B cell (primary cell): ENCODE measurements at regions of chr9 and their contacts with region 1.

Region 1: GRCh38 chr9:27529316-27530278 is at the start of gene MOB3B:
- DNase-seq: peak; percentile 89
- ATAC-seq: peak; percentile 83
- H3K4me3 ChIP-seq: peak within 1 kb of the TSS; percentile 71 to 93 (median 82)
- H3K4me3 Mint-ChIP-seq: peak within 1 kb of the TSS; percentile 100
- H3K27ac ChIP-seq: peak within 1 kb of the TSS; percentile 88 to 97
- H3K27ac Mint-ChIP-seq: peak within 1 kb of the TSS; percentile 99
- H3K4me1 ChIP-seq: peaks cover 28 to 30% of the 10 kb centered on the region in 2 donors
- H3K4me1 Mint-ChIP-seq: peaks cover 49% of the 10 kb centered on the region
- H3K27me3 ChIP-seq: no peaks in the 10 kb centered on the region
- H3K27me3 Mint-ChIP-seq: no peaks in the 10 kb centered on the region
- CTCF ChIP-seq: peak; percentile 97
- total RNA-seq, gene MOB3B: 7.3 and 7.6 TPM in 2 replicates

Region 2: DNA sequence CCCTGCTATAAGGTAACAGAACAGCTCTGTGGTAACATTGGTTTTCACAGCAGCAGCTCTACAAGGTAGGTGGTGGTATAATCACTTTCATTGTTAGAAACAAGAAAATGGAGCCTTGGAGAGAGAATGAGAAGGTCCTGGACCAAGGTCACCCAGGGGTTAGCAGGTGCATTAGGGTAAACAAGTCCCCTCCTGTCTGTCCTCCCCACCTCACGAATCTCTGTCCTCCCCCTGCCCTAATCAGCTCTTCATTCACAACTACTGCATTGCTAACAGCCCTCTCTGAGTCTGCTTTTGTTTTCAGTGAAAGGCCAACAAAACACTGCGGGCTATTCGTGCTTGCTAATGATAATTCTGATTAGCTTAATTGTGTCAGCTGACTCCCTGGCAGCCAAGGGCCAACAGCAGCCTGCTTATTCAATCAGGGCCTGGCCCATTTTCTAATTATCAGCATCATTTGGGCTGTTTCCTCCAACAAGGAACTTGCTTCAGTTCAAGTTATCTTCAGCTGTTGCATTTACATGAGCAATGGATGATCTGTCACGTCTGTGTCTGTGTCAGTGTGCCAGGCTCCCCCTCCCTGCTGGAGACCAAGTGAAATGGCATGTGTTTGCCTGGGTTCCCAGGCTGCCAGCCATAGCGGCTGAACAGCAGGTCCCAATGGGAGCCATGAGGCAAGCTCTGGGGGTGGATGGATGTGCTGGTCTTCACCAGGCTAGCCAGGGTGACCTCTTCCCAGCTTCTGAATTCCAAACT is 175.9 kb before region 1 on chr9:
- CTCF ChIA-PET with region 1: interaction called, 28 read pairs
- POLR2A ChIA-PET with region 1: no interaction called
- intact Hi-C with region 1: loop called (anchors 5 kb)
- DNase-seq: peak; percentile 48
- ATAC-seq: peak; percentile 68
- H3K4me3 ChIP-seq: no peak overlapping the region
- H3K4me3 Mint-ChIP-seq: no peak overlapping the region
- H3K27ac ChIP-seq: peak overlapping the region; percentile 0 to 58
- H3K27ac Mint-ChIP-seq: peak overlapping the region; percentile 84
- H3K4me1 ChIP-seq: peaks cover 31 to 34% of the 10 kb centered on the region in 2 donors
- H3K4me1 Mint-ChIP-seq: peaks cover 54% of the 10 kb centered on the region
- H3K27me3 ChIP-seq: no peaks in the 10 kb centered on the region
- H3K27me3 Mint-ChIP-seq: no peaks in the 10 kb centered on the region
- CTCF ChIP-seq: peak; percentile 16

Region 3: GRCh38 chr9:27371382-27371781 is 158.2 kb before region 1 on chr9:
- CTCF ChIA-PET with region 1: interaction called, 22 read pairs
- POLR2A ChIA-PET with region 1: interaction called, 4 read pairs
- intact Hi-C with region 1: loop called (anchors 2 kb)
- DNase-seq: no peak
- ATAC-seq: no peak
- H3K4me3 ChIP-seq: no peak overlapping the region
- H3K4me3 Mint-ChIP-seq: no peak overlapping the region
- H3K27ac ChIP-seq: no peak overlapping the region
- H3K27ac Mint-ChIP-seq: no peak overlapping the region
- H3K4me1 ChIP-seq: peaks cover 58 to 67% of the 10 kb centered on the region in 2 donors
- H3K4me1 Mint-ChIP-seq: peaks cover 66% of the 10 kb centered on the region
- H3K27me3 ChIP-seq: no peaks in the 10 kb centered on the region
- H3K27me3 Mint-ChIP-seq: no peaks in the 10 kb centered on the region
- CTCF ChIP-seq: no peak

Region 4: GRCh38 chr9:27394154-27394825 is 135.3 kb before region 1 on chr9:
- CTCF ChIA-PET with region 1: interaction called, 11 read pairs
- POLR2A ChIA-PET with region 1: no interaction called
- intact Hi-C with region 1: no loop called
- DNase-seq: no peak
- ATAC-seq: no peak
- H3K4me3 ChIP-seq: no peak overlapping the region
- H3K4me3 Mint-ChIP-seq: no peak overlapping the region
- H3K27ac ChIP-seq: peak overlapping the region; percentile 28 to 68
- H3K27ac Mint-ChIP-seq: peak overlapping the region; percentile 34
- H3K4me1 ChIP-seq: peaks cover 51 to 58% of the 10 kb centered on the region in 2 donors
- H3K4me1 Mint-ChIP-seq: peaks cover 71% of the 10 kb centered on the region
- H3K27me3 ChIP-seq: no peaks in the 10 kb centered on the region
- H3K27me3 Mint-ChIP-seq: no peaks in the 10 kb centered on the region
- CTCF ChIP-seq: no peak

Region 5: DNA sequence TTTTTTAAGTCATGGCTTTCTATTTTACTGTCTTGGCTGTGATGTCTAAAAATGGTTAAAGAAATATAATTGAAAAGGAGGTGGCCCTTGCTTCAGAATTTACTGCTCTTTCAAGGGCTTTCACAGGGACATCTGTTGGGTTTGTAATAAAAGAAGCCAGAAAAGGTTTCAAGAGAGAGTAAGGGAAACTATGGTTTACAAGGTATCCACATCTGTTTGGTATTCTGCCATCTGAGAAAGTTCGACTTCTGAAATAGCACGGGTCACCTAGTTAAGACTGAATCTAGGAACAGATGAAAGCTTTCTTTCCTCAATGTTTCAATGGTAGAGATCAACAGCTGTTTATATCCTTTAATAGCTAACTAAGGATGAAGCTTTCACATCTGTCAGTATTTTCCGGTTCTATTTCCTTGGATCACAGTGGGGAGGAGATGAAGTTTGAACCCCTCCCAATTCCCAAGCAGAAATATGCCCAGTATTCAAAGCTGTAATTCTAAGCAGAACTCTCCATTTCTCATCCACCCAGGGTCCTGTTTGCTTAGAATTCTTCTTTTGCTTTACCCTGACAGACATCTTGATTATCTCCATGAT is 78.3 kb before region 1 on chr9:
- CTCF ChIA-PET with region 1: interaction called, 10 read pairs
- POLR2A ChIA-PET with region 1: no interaction called
- intact Hi-C with region 1: no loop called
- DNase-seq: no peak
- ATAC-seq: no peak
- H3K4me3 ChIP-seq: no peak overlapping the region
- H3K4me3 Mint-ChIP-seq: no peak overlapping the region
- H3K27ac ChIP-seq: no peak overlapping the region
- H3K27ac Mint-ChIP-seq: peak overlapping the region; percentile 32
- H3K4me1 ChIP-seq: peaks cover 19 to 21% of the 10 kb centered on the region in 2 donors
- H3K4me1 Mint-ChIP-seq: peaks cover 53% of the 10 kb centered on the region
- H3K27me3 ChIP-seq: no peaks in the 10 kb centered on the region
- H3K27me3 Mint-ChIP-seq: no peaks in the 10 kb centered on the region
- CTCF ChIP-seq: no peak

Region 6: GRCh38 chr9:27489087-27489876 is 40.3 kb before region 1 on chr9:
- CTCF ChIA-PET with region 1: interaction called, 29 read pairs
- POLR2A ChIA-PET with region 1: no interaction called
- intact Hi-C with region 1: loop called (anchors 1 kb)
- DNase-seq: peak; percentile 36
- ATAC-seq: no peak
- H3K4me3 ChIP-seq: no peak overlapping the region
- H3K4me3 Mint-ChIP-seq: peak overlapping the region; percentile 63
- H3K27ac ChIP-seq: peak overlapping the region; percentile 28 to 60
- H3K27ac Mint-ChIP-seq: peak overlapping the region; percentile 72
- H3K4me1 ChIP-seq: peaks cover 74 to 83% of the 10 kb centered on the region in 2 donors
- H3K4me1 Mint-ChIP-seq: peaks cover 76% of the 10 kb centered on the region
- H3K27me3 ChIP-seq: no peaks in the 10 kb centered on the region
- H3K27me3 Mint-ChIP-seq: no peaks in the 10 kb centered on the region
- CTCF ChIP-seq: no peak

Region 7: DNA sequence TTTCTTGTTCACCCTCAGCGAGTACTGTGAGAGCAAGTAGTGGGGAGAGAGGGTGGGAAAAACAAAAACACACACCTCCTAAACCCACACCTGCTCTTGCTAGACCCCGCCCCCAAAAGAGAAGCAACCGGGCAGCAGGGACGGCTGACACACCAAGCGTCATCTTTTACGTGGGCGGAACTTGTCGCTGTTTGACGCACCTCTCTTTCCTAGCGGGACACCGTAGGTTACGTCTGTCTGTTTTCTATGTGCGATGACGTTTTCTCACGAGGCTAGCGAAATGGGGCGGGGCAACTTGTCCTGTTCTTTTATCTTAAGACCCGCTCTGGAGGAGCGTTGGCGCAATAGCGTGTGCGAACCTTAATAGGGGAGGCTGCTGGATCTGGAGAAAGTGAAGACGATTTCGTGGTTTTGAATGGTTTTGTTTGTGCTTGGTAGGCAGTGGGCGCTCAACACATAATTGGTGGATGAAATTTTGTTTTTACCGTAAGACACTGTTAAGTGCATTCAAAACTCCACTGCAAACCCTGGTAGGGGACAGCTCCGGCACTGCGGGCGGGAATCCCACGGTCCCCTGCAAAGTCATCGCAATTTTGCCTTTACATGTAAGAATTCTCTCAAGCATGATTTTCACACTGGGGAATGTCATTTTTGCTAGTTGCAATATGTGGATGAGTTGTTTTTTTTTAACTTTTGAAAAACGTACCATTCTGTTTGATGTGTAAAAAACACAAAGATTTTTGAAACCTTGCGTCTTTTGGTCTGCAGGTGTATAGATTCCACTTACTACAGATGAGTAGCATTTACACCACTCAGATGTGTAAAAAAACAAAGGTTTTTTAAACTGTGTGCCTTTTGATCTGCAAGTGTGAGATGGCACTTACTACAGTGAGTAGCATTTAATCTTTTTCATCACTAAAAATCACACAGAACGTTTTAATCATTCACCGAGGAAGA is 44.3 kb after region 1 on chr9:
- CTCF ChIA-PET with region 1: interaction called, 9 read pairs
- POLR2A ChIA-PET with region 1: no interaction called
- intact Hi-C with region 1: loop called (anchors 1 kb)
- DNase-seq: peak; percentile 100
- ATAC-seq: peak; percentile 84
- H3K4me3 ChIP-seq: peak overlapping the region; percentile 81 to 94 (median 92)
- H3K4me3 Mint-ChIP-seq: peak overlapping the region; percentile 98
- H3K27ac ChIP-seq: peak overlapping the region; percentile 97 to 99
- H3K27ac Mint-ChIP-seq: peak overlapping the region; percentile 100
- H3K4me1 ChIP-seq: peaks cover 16 to 19% of the 10 kb centered on the region in 2 donors
- H3K4me1 Mint-ChIP-seq: peaks cover 27% of the 10 kb centered on the region
- H3K27me3 ChIP-seq: no peaks in the 10 kb centered on the region
- H3K27me3 Mint-ChIP-seq: no peaks in the 10 kb centered on the region
- CTCF ChIP-seq: no peak

Region 8: DNA sequence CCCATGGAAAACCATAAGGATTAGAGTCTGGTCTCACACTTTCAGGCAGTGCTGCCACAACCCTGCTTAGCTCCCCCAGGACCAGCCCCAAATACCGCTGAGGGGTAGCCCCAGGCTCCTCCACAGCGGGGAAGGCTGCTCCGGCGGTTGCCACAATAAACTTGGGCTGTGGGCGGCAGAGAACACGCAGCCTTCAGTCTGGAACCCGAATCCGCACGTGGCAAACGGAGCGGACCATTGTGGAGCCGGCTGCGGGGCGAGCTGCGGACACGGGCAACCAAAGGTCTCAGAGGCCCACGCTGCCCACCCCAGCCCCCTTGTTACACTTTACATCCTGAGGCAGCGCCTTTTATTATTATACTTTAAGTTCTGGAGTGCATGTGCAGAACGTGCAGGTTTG is 81.0 kb after region 1 on chr9:
- CTCF ChIA-PET with region 1: no interaction called
- POLR2A ChIA-PET with region 1: no interaction called
- intact Hi-C with region 1: no loop called
- DNase-seq: no peak
- ATAC-seq: no peak
- H3K4me3 ChIP-seq: no peak overlapping the region
- H3K4me3 Mint-ChIP-seq: no peak overlapping the region
- H3K27ac ChIP-seq: no peak overlapping the region
- H3K27ac Mint-ChIP-seq: no peak overlapping the region
- H3K4me1 ChIP-seq: no peaks in the 10 kb centered on the region
- H3K4me1 Mint-ChIP-seq: no peaks in the 10 kb centered on the region
- H3K27me3 ChIP-seq: peaks cover 0 to 9% (median 2%) of the 10 kb centered on the region in 4 experiments
- H3K27me3 Mint-ChIP-seq: peaks cover 29% of the 10 kb centered on the region
- CTCF ChIP-seq: no peak